Naive thymus-derived CD4-positive, alpha-beta T cell (primary cell): ENCODE measurements at regions of chr18 and their contacts with region 1.

Region 1: GRCh38 chr18:34242740-34243139 is 18.0 kb upstream of the NOL4 start:
- DNase-seq: no peak
- ATAC-seq: no peak
- H3K4me3 ChIP-seq: no peak overlapping the region
- H3K4me3 Mint-ChIP-seq: no peak overlapping the region
- H3K27ac ChIP-seq: no peak overlapping the region
- H3K27ac Mint-ChIP-seq: no peak overlapping the region
- H3K4me1 ChIP-seq: no peaks in the 10 kb centered on the region
- H3K4me1 Mint-ChIP-seq: no peaks in the 10 kb centered on the region
- H3K27me3 ChIP-seq: no peaks in the 10 kb centered on the region
- H3K27me3 Mint-ChIP-seq: no peaks in the 10 kb centered on the region

Region 2: DNA sequence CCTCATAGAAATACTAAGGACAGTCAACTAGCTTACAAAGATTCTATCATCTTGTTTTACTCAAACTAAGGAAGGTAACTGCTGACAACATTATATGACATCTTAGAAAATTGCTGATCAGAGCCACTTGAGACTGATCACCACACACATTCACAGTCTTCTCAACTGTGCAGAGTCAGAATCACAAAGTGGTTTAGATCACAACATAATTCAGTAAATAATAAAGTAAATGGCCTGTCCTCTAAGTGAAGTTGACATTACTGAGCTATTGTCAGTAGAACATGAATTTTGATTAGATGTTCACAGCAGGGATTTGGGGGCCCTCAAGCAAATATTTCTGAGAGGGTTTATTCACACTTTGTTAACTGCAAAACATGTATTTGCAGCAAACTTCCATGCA is 46.5 kb before region 1 on chr18:
- CTCF ChIA-PET with region 1: no interaction called
- POLR2A ChIA-PET with region 1: no interaction called
- intact Hi-C with region 1: no loop called
- DNase-seq: no peak
- ATAC-seq: no peak
- H3K4me3 ChIP-seq: no peak overlapping the region
- H3K4me3 Mint-ChIP-seq: no peak overlapping the region
- H3K27ac ChIP-seq: no peak overlapping the region
- H3K27ac Mint-ChIP-seq: no peak overlapping the region
- H3K4me1 ChIP-seq: no peaks in the 10 kb centered on the region
- H3K4me1 Mint-ChIP-seq: no peaks in the 10 kb centered on the region
- H3K27me3 ChIP-seq: no peaks in the 10 kb centered on the region
- H3K27me3 Mint-ChIP-seq: no peaks in the 10 kb centered on the region

Region 3: GRCh38 chr18:34299828-34300227 is 57.1 kb after region 1 on chr18:
- CTCF ChIA-PET with region 1: no interaction called
- POLR2A ChIA-PET with region 1: no interaction called
- intact Hi-C with region 1: loop called in 1 of 2 experiments (anchors 10 kb)
- DNase-seq: no peak
- ATAC-seq: no peak
- H3K4me3 ChIP-seq: no peak overlapping the region
- H3K4me3 Mint-ChIP-seq: no peak overlapping the region
- H3K27ac ChIP-seq: no peak overlapping the region
- H3K27ac Mint-ChIP-seq: no peak overlapping the region
- H3K4me1 ChIP-seq: no peaks in the 10 kb centered on the region
- H3K4me1 Mint-ChIP-seq: no peaks in the 10 kb centered on the region
- H3K27me3 ChIP-seq: no peaks in the 10 kb centered on the region
- H3K27me3 Mint-ChIP-seq: no peaks in the 10 kb centered on the region

Region 4: GRCh38 chr18:34330308-34330707 is 87.6 kb after region 1 on chr18:
- CTCF ChIA-PET with region 1: no interaction called
- POLR2A ChIA-PET with region 1: no interaction called
- intact Hi-C with region 1: no loop called
- DNase-seq: no peak
- ATAC-seq: no peak
- H3K4me3 ChIP-seq: no peak overlapping the region
- H3K4me3 Mint-ChIP-seq: no peak overlapping the region
- H3K27ac ChIP-seq: no peak overlapping the region
- H3K27ac Mint-ChIP-seq: no peak overlapping the region
- H3K4me1 ChIP-seq: no peaks in the 10 kb centered on the region
- H3K4me1 Mint-ChIP-seq: no peaks in the 10 kb centered on the region
- H3K27me3 ChIP-seq: no peaks in the 10 kb centered on the region
- H3K27me3 Mint-ChIP-seq: no peaks in the 10 kb centered on the region

Region 5: DNA sequence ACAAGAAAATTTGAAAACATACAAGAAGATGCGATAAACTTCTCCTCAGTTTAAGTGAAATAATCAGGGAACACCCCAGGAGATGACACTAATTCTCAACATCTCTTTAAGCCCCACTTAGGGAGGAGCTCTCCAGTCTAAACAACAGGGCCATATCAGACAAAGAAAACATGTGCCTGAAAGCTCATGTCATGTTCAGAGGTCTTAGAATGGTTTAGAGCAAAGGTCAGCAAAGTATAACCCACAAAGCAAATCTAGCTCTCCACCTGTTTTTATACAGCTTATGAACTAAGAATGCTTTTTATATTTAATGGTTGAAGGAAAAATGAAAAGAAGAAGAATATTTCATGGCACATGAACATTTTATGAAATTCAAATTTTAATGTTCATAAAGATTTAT is 137.6 kb after region 1 on chr18:
- CTCF ChIA-PET with region 1: no interaction called
- POLR2A ChIA-PET with region 1: no interaction called
- intact Hi-C with region 1: no loop called
- DNase-seq: no peak
- ATAC-seq: no peak
- H3K4me3 ChIP-seq: no peak overlapping the region
- H3K4me3 Mint-ChIP-seq: no peak overlapping the region
- H3K27ac ChIP-seq: no peak overlapping the region
- H3K27ac Mint-ChIP-seq: no peak overlapping the region
- H3K4me1 ChIP-seq: no peaks in the 10 kb centered on the region
- H3K4me1 Mint-ChIP-seq: no peaks in the 10 kb centered on the region
- H3K27me3 ChIP-seq: no peaks in the 10 kb centered on the region
- H3K27me3 Mint-ChIP-seq: no peaks in the 10 kb centered on the region